ENCODE measurements at regions of chr3 and their contacts with region 1.

Region 1: GRCh38 chr3:14007006-14007405 is 117.7 kb downstream of the CHCHD4 start:
- DNase-seq: no peak
- ATAC-seq: no peak
- H3K4me3 ChIP-seq: no peak overlapping the region
- H3K4me3 Mint-ChIP-seq: no peak overlapping the region
- H3K27ac ChIP-seq: no peak overlapping the region
- H3K27ac Mint-ChIP-seq: no peak overlapping the region
- H3K4me1 ChIP-seq: no peaks in the 10 kb centered on the region
- H3K4me1 Mint-ChIP-seq: no peaks in the 10 kb centered on the region
- H3K27me3 ChIP-seq: peaks cover 0 to 2% (median 0%) of the 10 kb centered on the region in 4 experiments
- H3K27me3 Mint-ChIP-seq: peaks cover 25% of the 10 kb centered on the region
- CTCF ChIP-seq: no peak

Region 2: DNA sequence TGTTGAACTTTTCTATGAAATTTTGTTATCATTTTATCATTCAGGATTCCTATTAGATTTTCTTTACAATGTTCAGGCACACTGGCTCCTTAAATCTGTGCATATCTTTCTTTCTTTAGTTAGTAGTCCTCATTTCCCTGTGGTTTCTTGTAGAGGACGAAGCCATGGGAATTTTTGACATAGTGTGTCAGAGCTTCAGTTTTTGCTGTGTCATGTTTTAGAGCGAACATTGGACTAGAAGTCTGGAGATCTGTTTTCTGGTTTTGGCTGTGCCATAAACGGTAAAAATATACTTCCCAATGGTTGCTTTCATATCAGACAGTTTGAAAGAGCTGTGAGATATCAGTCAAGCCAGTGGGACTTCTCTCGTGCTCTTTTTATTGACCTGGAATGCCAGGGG is 12.5 kb after region 1 on chr3:
- CTCF ChIA-PET with region 1: no interaction called
- POLR2A ChIA-PET with region 1: no interaction called
- intact Hi-C with region 1: loop called (anchors 1 kb)
- DNase-seq: no peak
- ATAC-seq: no peak
- H3K4me3 ChIP-seq: no peak overlapping the region
- H3K4me3 Mint-ChIP-seq: no peak overlapping the region
- H3K27ac ChIP-seq: no peak overlapping the region
- H3K27ac Mint-ChIP-seq: no peak overlapping the region
- H3K4me1 ChIP-seq: no peaks in the 10 kb centered on the region
- H3K4me1 Mint-ChIP-seq: no peaks in the 10 kb centered on the region
- H3K27me3 ChIP-seq: peaks cover 0 to 4% (median 0%) of the 10 kb centered on the region in 4 experiments
- H3K27me3 Mint-ChIP-seq: peaks cover 35% of the 10 kb centered on the region
- CTCF ChIP-seq: no peak

Region 3: GRCh38 chr3:14266361-14266760 is 259.4 kb after region 1 on chr3:
- CTCF ChIA-PET with region 1: no interaction called
- POLR2A ChIA-PET with region 1: no interaction called
- intact Hi-C with region 1: no loop called
- DNase-seq: no peak
- ATAC-seq: no peak
- H3K4me3 ChIP-seq: no peak overlapping the region
- H3K4me3 Mint-ChIP-seq: no peak overlapping the region
- H3K27ac ChIP-seq: no peak overlapping the region
- H3K27ac Mint-ChIP-seq: no peak overlapping the region
- H3K4me1 ChIP-seq: no peaks in the 10 kb centered on the region
- H3K4me1 Mint-ChIP-seq: no peaks in the 10 kb centered on the region
- H3K27me3 ChIP-seq: peaks cover 0 to 2% (median under 1%) of the 10 kb centered on the region in 4 experiments
- H3K27me3 Mint-ChIP-seq: peaks cover 27% of the 10 kb centered on the region
- CTCF ChIP-seq: no peak

Region 4: GRCh38 chr3:14532691-14533456 is 525.9 kb after region 1 on chr3:
- CTCF ChIA-PET with region 1: no interaction called
- POLR2A ChIA-PET with region 1: no interaction called
- intact Hi-C with region 1: no loop called
- DNase-seq: no peak
- ATAC-seq: no peak
- H3K4me3 ChIP-seq: no peak overlapping the region
- H3K4me3 Mint-ChIP-seq: no peak overlapping the region
- H3K27ac ChIP-seq: no peak overlapping the region
- H3K27ac Mint-ChIP-seq: no peak overlapping the region
- H3K4me1 ChIP-seq: no peaks in the 10 kb centered on the region
- H3K4me1 Mint-ChIP-seq: no peaks in the 10 kb centered on the region
- H3K27me3 ChIP-seq: peaks cover 0 to 9% (median 4%) of the 10 kb centered on the region in 4 experiments
- H3K27me3 Mint-ChIP-seq: peaks cover 30% of the 10 kb centered on the region
- CTCF ChIP-seq: no peak

Region 5: GRCh38 chr3:14699643-14700042 is 692.6 kb after region 1 on chr3:
- CTCF ChIA-PET with region 1: no interaction called
- POLR2A ChIA-PET with region 1: no interaction called
- intact Hi-C with region 1: no loop called
- DNase-seq: no peak
- ATAC-seq: no peak
- H3K4me3 ChIP-seq: no peak overlapping the region
- H3K4me3 Mint-ChIP-seq: no peak overlapping the region
- H3K27ac ChIP-seq: no peak overlapping the region
- H3K27ac Mint-ChIP-seq: no peak overlapping the region
- H3K4me1 ChIP-seq: no peaks in the 10 kb centered on the region
- H3K4me1 Mint-ChIP-seq: no peaks in the 10 kb centered on the region
- H3K27me3 ChIP-seq: no peaks in the 10 kb centered on the region
- H3K27me3 Mint-ChIP-seq: no peaks in the 10 kb centered on the region
- CTCF ChIP-seq: no peak